ENCODE measurements at regions of chr1 and their contacts with region 1.

Region 1: GRCh38 chr1:93437976-93438605 is 9.8 kb upstream of the FNBP1L start:
- DNase-seq: no peak
- ATAC-seq: peak; percentile 74
- H3K4me3 ChIP-seq: no peak overlapping the region
- H3K27ac ChIP-seq: no peak overlapping the region
- H3K4me1 ChIP-seq: no peaks in the 10 kb centered on the region
- H3K27me3 ChIP-seq: peaks cover 0 to 2% of the 10 kb centered on the region in 2 experiments; a peak in 2 of 4 replicates
- CTCF ChIP-seq: peak; percentile 30 to 61 (median 46); a peak in 5 of 6 replicates
- EP300 ChIP-seq: no peak
- POLR2A ChIP-seq: no peak
- RAD21 ChIP-seq: peak; percentile 76

Region 2: DNA sequence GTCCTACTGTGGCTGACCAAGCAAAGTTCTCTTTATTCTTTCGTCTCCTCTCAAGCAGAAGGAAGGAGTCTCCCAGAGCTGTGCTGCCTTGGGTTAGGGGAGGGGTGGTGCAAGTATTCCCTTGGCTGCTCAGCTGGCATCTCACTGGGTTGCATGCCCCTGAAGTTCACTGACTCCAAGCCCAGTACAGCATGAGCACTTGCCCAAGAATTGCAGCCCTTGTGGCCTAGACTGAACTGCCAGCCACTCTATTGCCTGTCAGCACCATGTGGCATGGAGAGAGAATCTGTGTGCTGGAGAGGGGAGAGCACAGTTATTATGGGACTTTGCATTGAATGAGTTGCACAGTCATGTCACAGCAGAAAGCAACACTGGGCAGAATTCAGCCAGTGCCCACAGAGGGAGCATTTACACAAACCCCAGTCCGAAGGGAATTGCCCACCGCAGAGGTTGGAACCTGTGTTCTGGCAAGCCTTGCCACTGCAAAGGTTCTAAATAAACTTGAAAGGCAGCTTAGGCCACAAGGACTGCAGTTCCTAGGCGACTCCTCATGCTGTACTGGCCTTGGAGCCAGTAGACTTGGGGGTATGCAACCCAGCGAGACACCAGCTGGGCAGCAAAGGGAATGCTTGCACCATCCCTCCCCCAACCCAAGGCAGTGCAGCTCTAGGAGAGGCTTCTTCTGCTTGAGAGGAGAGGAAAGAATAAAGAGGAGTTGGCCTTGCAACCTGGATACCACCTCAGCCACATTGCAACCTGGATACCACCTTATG is 63.6 kb before region 1 on chr1:
- CTCF ChIA-PET with region 1: no interaction called
- POLR2A ChIA-PET with region 1: no interaction called
- RAD21 ChIA-PET with region 1: no interaction called
- SMC1A ChIA-PET with region 1: no interaction called
- in situ Hi-C with region 1: no loop called
- intact Hi-C with region 1: no loop called
- DNase-seq: no peak
- ATAC-seq: no peak
- H3K4me3 ChIP-seq: no peak overlapping the region
- H3K27ac ChIP-seq: no peak overlapping the region
- H3K4me1 ChIP-seq: no peaks in the 10 kb centered on the region
- H3K27me3 ChIP-seq: no peaks in the 10 kb centered on the region
- CTCF ChIP-seq: no peak
- EP300 ChIP-seq: no peak
- POLR2A ChIP-seq: no peak
- RAD21 ChIP-seq: no peak

Region 3: GRCh38 chr1:93616996-93617669 is 179.0 kb after region 1 on chr1:
- CTCF ChIA-PET with region 1: interaction called, 4 read pairs
- POLR2A ChIA-PET with region 1: no interaction called
- RAD21 ChIA-PET with region 1: no interaction called
- SMC1A ChIA-PET with region 1: no interaction called
- in situ Hi-C with region 1: no loop called
- intact Hi-C with region 1: loop called (anchors 2 kb)
- DNase-seq: no peak
- ATAC-seq: no peak
- H3K4me3 ChIP-seq: no peak overlapping the region
- H3K27ac ChIP-seq: no peak overlapping the region
- H3K4me1 ChIP-seq: peaks cover 25% of the 10 kb centered on the region
- H3K27me3 ChIP-seq: peaks cover 0 to 2% of the 10 kb centered on the region in 2 experiments; a peak in 3 of 4 replicates
- CTCF ChIP-seq: no peak
- EP300 ChIP-seq: no peak
- POLR2A ChIP-seq: no peak
- RAD21 ChIP-seq: no peak

Measured in GM12878 (cell line).